Breast epithelium (tissue), 4 donors: ENCODE measurements at regions of chr1 and their contacts with region 1.

Region 1: GRCh38 chr1:94643819-94644218 is 102.3 kb upstream of the F3 start:
- DNase-seq: no peak
- H3K4me3 ChIP-seq: no peak overlapping the region
- H3K27ac ChIP-seq: no peak overlapping the region
- H3K4me1 ChIP-seq: no peaks in the 10 kb centered on the region
- H3K27me3 ChIP-seq: no peaks in the 10 kb centered on the region
- CTCF ChIP-seq: no peak
- POLR2A ChIP-seq: no peak

Region 2: GRCh38 chr1:94672934-94673333 is 29.1 kb after region 1 on chr1:
- intact Hi-C with region 1: loop called (anchors 1 kb)
- DNase-seq: no peak
- H3K4me3 ChIP-seq: no peak overlapping the region
- H3K27ac ChIP-seq: no peak overlapping the region
- H3K4me1 ChIP-seq: no peaks in the 10 kb centered on the region
- H3K27me3 ChIP-seq: no peaks in the 10 kb centered on the region
- CTCF ChIP-seq: no peak
- POLR2A ChIP-seq: no peak